ENCODE measurements at regions of chr1 and their contacts with region 1.

Region 1: GRCh38 chr1:147627435-147628110 is 42.8 kb downstream of the ACP6 start:
- DNase-seq: no peak
- H3K4me3 ChIP-seq: no peak overlapping the region
- H3K27ac ChIP-seq: no peak overlapping the region
- H3K4me1 ChIP-seq: no peaks in the 10 kb centered on the region
- H3K27me3 ChIP-seq: no peaks in the 10 kb centered on the region
- CTCF ChIP-seq: peak; percentile 72 to 93 (median 84)
- POLR2A ChIP-seq: no peak

Region 2: GRCh38 chr1:147504801-147505311 is 122.7 kb before region 1 on chr1:
- intact Hi-C with region 1: loop called (anchors 5 kb)
- DNase-seq: no peak
- H3K4me3 ChIP-seq: peak overlapping the region in 1 of 4 donors; percentile 22
- H3K27ac ChIP-seq: peak overlapping the region in 2 of 4 donors; percentile 22 to 29
- H3K4me1 ChIP-seq: no peaks in the 10 kb centered on the region
- H3K27me3 ChIP-seq: no peaks in the 10 kb centered on the region
- CTCF ChIP-seq: no peak
- POLR2A ChIP-seq: no peak

Measured in esophagus squamous epithelium (tissue), 5 donors.